A549 (cell line): ENCODE measurements at regions of chr2 and their contacts with region 1.

Region 1: DNA sequence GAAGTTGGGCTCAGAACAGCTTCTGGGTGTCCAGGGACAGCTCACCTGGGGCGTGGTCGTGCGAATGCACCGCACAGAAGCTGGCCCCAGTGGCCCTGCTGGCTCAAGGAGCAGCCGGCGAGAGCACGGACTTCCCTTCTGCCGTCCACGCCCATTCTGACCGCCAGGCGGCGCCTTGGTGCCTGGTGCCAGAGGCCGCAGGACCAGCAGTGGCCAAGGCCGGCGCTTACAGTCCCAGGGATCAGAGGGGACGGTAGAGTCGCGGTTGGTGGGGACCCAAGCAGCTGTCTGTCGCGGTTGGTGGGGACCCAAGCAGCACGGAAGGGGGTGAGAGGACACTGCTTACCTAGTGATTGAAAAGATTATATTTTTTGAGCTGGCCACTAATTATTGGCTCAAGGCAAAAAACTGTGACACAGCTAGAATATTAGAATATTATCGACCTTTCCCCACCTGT is 25.7 kb downstream of the NPPC start:
- DNase-seq: peak; percentile 84 to 86
- ATAC-seq: peak; percentile 97 to 99
- H3K4me3 ChIP-seq: no peak overlapping the region
- H3K27ac ChIP-seq: peak overlapping the region in 1 of 2 experiments; percentile 42; a peak in 1 of 6 replicates
- H3K4me1 ChIP-seq: no peaks in the 10 kb centered on the region
- CTCF ChIP-seq: peak; percentile 86
- EP300 ChIP-seq: no peak
- POLR2A ChIP-seq: no peak
- RAD21 ChIP-seq: peak; percentile 65 to 67

Region 2: DNA sequence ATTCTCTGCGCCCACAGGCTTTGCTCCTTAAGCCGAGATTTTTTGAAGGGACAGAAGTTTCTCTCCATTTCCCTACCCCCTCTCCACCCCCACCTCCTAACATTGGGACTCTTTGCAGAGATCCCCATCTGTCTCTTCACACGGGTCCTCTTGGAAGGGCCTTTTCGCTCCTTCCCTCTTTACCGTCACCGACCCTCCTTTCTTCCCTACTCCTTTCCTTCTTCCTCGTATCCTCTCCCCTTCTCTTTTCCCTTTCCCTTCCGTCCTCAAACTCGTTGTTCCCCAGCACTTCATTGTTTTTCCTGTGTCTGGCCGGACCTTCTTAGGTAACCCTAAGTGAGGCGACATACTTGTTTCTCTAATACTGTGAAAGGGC is 113.6 kb before region 1 on chr2:
- CTCF ChIA-PET with region 1: no interaction called
- POLR2A ChIA-PET with region 1: no interaction called
- DNase-seq: no peak
- ATAC-seq: peak in 1 of 2 experiments; percentile 23; a peak in 3 of 6 replicates
- H3K4me3 ChIP-seq: peak overlapping the region; percentile 96
- H3K27ac ChIP-seq: peak overlapping the region; percentile 86 to 87
- H3K4me1 ChIP-seq: peaks cover 21% of the 10 kb centered on the region
- CTCF ChIP-seq: no peak
- EP300 ChIP-seq: no peak
- POLR2A ChIP-seq: no peak
- RAD21 ChIP-seq: no peak

Region 3: DNA sequence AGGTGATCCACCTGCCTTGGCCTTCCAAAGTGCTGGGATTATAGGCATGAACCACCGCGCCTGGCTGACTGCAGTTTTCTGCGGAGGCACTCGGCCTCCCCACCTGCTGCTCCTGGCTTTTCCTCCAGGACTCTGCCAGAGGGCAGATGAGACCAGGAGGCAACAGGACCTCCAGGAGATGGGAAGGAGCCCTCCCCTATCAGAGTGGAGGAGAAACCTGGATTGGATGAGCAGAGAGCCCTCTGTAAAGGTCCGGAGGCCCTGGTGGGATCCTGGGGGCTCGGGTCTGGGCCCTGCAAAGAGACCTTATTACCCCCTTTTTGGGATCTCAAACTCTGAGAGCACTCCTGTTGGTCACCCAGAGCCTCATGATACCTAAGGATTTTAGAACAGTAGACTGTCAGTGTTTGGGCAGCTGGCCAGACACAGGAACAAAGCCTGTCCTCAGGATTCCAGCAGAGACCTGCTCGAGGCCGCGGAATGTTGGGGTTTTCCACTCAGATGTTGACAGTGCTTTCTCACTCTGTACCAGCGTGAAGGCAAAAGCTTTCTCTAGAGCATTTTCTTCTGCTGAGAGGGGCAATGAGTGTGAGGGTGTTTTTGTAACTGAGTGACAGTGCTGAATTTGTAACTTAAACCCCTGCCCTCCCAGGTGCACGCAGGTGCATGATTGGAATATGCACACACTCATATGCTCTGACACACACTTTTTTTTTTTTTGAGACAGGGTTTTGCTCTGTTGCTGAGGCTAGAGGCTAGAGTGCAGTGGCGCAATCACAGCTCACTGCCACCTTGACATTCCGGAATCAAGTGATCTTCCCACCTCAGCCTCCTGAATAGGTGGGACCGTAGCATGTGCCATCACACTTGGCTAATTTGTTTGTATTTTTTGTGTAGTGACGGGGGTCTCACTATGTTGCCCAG is 22.7 kb before region 1 on chr2:
- CTCF ChIA-PET with region 1: interaction called, 27 read pairs
- POLR2A ChIA-PET with region 1: no interaction called
- DNase-seq: peak; percentile 36 to 55
- ATAC-seq: peak; percentile 70 to 83
- H3K4me3 ChIP-seq: no peak overlapping the region
- H3K27ac ChIP-seq: peak overlapping the region in 1 of 2 experiments; percentile 55; a peak in 2 of 6 replicates
- H3K4me1 ChIP-seq: peaks cover 19% of the 10 kb centered on the region; the same call in 2 of the 3 replicates
- CTCF ChIP-seq: no peak
- EP300 ChIP-seq: no peak
- POLR2A ChIP-seq: no peak
- RAD21 ChIP-seq: no peak

Region 4: DNA sequence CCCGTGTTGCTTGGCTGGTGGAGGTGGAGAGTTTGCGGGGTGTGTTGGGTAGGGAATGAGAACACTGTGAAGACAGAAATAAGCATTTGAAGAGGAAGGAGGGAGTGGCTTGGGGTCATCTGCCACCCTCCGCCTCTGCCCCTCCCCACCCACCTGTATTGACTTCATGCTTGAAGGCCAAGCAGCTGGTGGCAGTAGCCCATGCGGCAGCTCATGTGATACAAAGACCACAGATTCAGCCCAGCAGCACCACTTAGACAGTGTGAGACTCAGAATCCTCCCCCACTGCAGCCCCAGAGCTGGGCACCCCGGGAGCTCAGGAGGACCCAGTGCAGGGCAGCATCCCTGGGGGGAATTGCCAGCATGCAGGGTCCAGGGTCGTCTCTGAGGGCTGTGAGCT is 10.3 kb after region 1 on chr2:
- CTCF ChIA-PET with region 1: interaction called, 20 read pairs
- POLR2A ChIA-PET with region 1: no interaction called
- DNase-seq: no peak
- ATAC-seq: no peak
- H3K4me3 ChIP-seq: no peak overlapping the region
- H3K27ac ChIP-seq: no peak overlapping the region
- H3K4me1 ChIP-seq: peaks cover 3% of the 10 kb centered on the region; the same call in 1 of the 3 replicates
- CTCF ChIP-seq: no peak
- EP300 ChIP-seq: no peak
- POLR2A ChIP-seq: no peak
- RAD21 ChIP-seq: no peak

Region 5: DNA sequence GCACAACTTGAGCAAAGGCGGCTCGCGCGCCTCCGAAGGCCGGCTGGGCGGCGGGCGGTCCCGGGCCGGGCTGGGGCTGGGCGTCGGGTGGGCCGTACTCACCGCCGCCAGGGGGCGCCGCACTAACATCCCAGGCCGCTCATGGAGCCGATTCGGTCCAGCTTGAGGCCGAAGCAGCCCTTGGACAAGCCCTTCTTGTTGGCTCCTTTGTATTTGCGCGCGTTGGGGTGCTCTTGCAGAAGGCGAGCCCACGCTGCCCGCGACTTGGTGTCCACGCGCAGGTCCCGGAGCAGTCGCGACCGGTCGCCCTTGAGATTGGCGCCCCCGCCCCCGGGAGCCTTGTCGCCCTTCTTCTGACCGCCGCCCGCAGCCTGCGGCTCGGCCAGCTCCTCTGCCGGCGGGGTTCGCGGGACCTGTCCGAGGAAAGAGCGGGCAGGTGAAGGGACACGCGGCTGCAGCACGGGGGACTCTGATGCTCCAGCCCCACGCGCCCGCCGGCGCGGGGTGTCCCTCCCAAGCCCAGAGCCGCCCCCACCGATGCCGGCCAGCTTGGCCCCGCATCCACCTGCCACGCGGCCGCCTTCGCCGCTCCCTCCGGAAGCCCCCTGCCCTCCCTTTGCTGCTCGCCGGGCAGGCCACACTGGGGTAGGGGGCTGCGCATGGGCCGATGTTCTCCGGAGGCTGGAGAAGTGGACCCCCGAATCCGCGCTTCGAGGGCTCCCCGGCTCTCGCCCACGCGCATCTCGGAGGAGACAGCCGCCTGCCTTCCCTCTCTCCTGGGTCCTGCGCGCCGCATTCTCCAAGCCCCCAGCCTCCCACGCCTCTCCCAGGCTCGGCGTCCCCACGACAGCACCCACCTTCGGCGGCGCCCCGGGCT is 25.0 kb after region 1 on chr2:
- CTCF ChIA-PET with region 1: interaction called, 74 read pairs
- POLR2A ChIA-PET with region 1: no interaction called
- DNase-seq: peak; percentile 86 to 88
- ATAC-seq: peak; percentile 79 to 93
- H3K4me3 ChIP-seq: peak overlapping the region; percentile 47
- H3K27ac ChIP-seq: peak overlapping the region in 1 of 2 experiments; percentile 69; a peak in 3 of 6 replicates
- H3K4me1 ChIP-seq: peaks cover 4% of the 10 kb centered on the region; the same call in 1 of the 3 replicates
- CTCF ChIP-seq: peak; percentile 94
- EP300 ChIP-seq: no peak
- POLR2A ChIP-seq: no peak
- RAD21 ChIP-seq: peak; percentile 65 to 86

Region 6: DNA sequence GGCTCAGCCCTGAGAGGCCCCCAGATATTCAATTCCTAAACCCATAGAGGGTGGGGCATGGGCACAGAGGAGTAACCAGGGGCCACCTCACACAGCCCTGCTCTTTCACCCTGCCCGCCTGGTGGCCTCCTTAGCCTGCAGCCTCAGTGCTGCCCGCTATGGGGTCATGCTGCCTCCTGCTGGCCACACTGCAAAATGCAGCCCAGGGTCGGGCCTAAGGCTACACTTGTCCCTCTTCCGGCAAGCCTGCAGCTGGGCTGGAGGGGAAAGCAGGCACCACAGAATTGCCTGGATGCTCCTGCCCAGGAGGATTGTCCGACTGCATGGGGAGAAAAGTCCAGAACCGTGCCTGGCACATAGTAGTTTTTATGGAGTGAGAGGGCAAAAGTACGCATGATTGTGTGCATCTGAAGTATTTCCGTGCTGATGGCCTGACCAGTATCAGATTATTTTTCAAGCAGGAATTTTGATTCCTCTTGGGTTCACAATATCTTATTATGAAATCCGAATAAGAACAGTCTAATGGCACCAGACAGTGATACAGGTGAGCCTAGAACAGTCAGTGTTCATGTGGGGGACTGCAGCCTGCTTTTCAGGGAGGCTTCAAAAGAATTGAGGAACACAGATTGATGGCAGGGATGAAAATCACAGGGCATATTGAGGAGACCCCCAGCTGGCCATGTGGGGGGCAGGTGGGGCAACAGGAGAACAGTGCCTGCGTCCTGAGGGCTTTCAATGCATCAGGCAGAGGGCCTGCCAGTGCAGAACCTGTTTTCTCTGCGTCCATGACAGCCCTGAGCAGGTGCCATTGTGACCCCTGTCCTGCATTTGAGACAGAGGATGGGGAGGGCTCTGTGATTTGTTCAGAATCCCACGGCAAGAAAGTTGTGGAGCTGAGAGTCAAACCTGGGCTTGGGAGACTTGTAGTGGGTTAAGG is 426.9 kb after region 1 on chr2:
- CTCF ChIA-PET with region 1: interaction called, 75 read pairs
- POLR2A ChIA-PET with region 1: no interaction called
- DNase-seq: peak; percentile 49 to 75
- ATAC-seq: peak; percentile 63 to 92
- H3K4me3 ChIP-seq: no peak overlapping the region
- H3K27ac ChIP-seq: no peak overlapping the region
- H3K4me1 ChIP-seq: no peaks in the 10 kb centered on the region
- CTCF ChIP-seq: peak; percentile 72
- EP300 ChIP-seq: no peak
- POLR2A ChIP-seq: no peak
- RAD21 ChIP-seq: peak; percentile 73 to 79

Region 7: DNA sequence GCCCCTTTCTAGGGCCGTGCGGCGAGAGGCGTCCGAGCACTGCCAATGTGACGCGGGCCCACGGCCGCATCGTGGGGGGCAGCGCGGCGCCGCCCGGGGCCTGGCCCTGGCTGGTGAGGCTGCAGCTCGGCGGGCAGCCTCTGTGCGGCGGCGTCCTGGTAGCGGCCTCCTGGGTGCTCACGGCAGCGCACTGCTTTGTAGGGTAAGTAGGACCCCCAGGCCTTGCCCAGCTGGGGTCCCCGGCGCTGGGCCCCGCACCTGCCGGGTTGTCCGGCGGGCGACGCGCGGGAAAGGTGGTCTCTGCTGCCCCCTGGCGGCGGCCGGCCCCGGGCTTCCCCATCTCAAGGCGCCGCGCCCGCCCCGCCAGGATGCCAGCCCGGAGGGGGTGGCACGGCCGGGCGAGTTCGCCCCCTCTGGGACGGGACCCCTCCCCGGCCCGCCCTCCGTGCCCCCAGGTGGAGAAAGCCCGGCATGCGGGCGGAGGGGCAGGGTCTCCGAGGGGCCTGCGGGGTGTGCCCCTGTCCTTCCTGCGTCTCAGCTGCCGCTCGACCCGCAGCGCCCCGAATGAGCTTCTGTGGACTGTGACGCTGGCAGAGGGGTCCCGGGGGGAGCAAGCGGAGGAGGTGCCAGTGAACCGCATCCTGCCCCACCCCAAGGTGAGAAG is 621.6 kb after region 1 on chr2:
- CTCF ChIA-PET with region 1: interaction called, 36 read pairs
- POLR2A ChIA-PET with region 1: interaction called, 3 read pairs
- DNase-seq: peak; percentile 42 to 60
- ATAC-seq: peak; percentile 23 to 67; a peak in 3 of 6 replicates
- H3K4me3 ChIP-seq: peak overlapping the region; percentile 40
- H3K27ac ChIP-seq: peak overlapping the region in 1 of 2 experiments; percentile 74; a peak in 3 of 6 replicates
- H3K4me1 ChIP-seq: peaks cover 17% of the 10 kb centered on the region; the same call in 2 of the 3 replicates
- CTCF ChIP-seq: peak; percentile 97
- EP300 ChIP-seq: no peak
- POLR2A ChIP-seq: no peak
- RAD21 ChIP-seq: peak; percentile 77 to 94